ENCODE measurements at regions of chr10 and their contacts with region 1.

Region 1: DNA sequence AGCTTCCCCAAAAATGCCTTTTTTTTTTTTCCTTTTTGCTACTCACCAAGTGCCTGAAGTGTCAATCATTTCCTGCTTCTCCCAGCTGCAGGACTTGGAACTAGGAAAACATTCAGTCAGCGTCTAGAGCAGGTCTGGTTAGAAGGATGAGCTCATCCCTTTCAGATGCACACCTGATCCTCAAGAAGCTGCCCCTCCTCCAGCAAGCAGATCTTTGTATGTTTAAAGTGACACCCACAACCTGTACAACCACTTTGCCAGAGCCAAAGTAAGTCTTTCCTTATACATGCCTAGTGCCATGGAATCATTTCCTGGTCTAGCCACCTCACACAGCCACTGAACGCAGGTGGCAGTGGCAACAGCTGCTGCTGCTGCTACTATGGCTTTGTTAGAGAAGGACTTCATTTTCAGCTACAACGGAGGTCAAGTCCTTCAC is 10.4 kb upstream of the USP54 start:
- DNase-seq: peak; percentile 88
- H3K4me3 ChIP-seq: no peak overlapping the region
- H3K27ac ChIP-seq: no peak overlapping the region
- H3K4me1 ChIP-seq: peaks cover 18% of the 10 kb centered on the region
- H3K27me3 ChIP-seq: no peaks in the 10 kb centered on the region
- CTCF ChIP-seq: no peak

Region 2: DNA sequence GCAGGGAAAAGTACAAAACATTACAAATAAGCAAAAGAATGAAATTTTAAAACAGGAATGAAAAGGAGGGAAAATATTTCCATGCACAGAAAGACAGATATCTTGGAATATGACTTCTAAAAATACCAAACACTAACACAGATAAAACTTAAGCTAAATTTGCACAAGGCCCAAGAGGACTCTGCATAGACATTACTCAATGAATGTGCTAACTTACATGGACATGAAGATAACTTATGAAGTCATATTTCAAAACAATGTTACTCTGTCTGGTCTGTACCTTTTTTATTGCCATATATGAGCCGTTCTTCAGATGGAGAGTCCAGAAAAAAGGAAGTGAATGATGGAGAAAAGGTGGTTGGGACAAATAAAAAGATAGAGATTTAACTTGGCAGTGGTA is 153.1 kb before region 1 on chr10:
- CTCF ChIA-PET with region 1: no interaction called
- dilution Hi-C with region 1: no loop called
- in situ Hi-C with region 1: no loop called
- intact Hi-C with region 1: no loop called
- DNase-seq: no peak
- H3K4me3 ChIP-seq: no peak overlapping the region
- H3K27ac ChIP-seq: no peak overlapping the region
- H3K4me1 ChIP-seq: no peaks in the 10 kb centered on the region
- H3K27me3 ChIP-seq: no peaks in the 10 kb centered on the region
- CTCF ChIP-seq: no peak

Region 3: GRCh38 chr10:73537288-73537687 is 64.2 kb before region 1 on chr10:
- CTCF ChIA-PET with region 1: no interaction called
- dilution Hi-C with region 1: loop called (anchors 5 kb)
- in situ Hi-C with region 1: no loop called
- intact Hi-C with region 1: no loop called
- DNase-seq: no peak
- H3K4me3 ChIP-seq: no peak overlapping the region
- H3K27ac ChIP-seq: no peak overlapping the region
- H3K4me1 ChIP-seq: no peaks in the 10 kb centered on the region
- H3K27me3 ChIP-seq: no peaks in the 10 kb centered on the region
- CTCF ChIP-seq: no peak

Region 4: DNA sequence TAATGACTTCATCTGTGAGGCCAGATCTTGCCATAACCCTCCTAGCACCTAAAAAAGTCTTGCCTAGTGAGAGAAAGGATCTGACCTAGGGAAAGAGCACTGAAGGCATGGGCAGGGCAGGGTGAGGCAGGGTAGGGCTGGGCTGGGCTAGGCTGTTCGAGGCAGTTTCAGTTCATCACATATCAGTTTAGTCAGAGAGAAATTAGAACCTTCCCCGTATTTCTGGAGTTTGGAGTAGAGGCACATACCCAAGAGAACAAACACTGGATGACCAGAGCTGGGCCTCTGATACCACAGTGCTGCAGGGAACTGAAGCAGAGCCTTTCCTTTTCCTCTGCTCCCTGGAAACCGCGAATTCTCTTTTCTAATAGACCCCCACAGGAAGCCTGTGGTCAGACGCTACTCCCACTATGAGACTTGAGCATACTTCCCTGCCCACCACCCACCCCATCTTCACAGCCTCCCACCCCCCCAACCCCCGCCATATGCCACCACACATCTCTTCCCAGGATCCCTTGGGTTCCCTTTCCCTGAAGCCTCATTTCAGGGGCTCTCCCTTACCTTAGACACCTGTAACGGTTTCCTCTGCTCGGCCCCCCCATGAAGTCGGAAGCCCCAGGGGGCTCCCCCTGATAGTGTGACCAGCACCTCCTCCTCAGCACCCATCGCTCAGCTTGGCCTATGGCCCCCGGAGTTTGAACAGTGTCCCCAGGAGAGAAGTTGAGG is 53.9 kb after region 1 on chr10:
- CTCF ChIA-PET with region 1: no interaction called
- dilution Hi-C with region 1: loop called (anchors 10 kb)
- in situ Hi-C with region 1: no loop called
- intact Hi-C with region 1: no loop called
- DNase-seq: no peak
- H3K4me3 ChIP-seq: no peak overlapping the region
- H3K27ac ChIP-seq: no peak overlapping the region
- H3K4me1 ChIP-seq: no peaks in the 10 kb centered on the region
- H3K27me3 ChIP-seq: no peaks in the 10 kb centered on the region
- CTCF ChIP-seq: no peak

Measured in mammary epithelial cell (primary cell).